CD8-positive, alpha-beta T cell (primary cell): ENCODE measurements at regions of chr6 and their contacts with region 1.

Region 1: DNA sequence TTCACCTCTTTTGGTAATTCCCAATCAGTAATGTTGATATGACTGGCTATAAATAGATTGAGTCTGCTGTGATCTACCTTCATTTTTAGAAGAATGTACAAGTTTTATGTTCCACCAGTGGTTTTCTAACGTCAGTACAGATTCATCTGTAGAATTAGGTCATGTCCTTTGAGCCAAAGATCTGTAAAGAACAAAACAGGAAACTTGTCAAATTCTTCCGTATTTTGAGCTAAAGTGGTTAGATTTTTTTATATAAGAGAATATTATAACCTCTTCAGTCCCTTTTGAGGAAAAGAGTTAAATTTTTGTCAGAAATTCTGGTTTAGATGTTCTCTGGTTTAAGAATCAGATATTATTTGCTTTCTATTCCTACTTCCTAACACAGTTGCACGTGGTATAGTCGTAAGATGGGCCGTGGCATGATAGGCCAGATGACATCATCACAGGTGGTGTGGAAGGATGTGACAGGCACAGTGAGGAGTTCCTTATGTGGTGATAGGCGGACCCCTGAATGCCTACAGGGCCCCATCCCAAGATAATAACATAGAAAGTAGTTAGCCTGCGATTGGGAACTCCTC is 62.3 kb downstream of the SNX9 start:
- DNase-seq: peak in 8 of 9 experiments; percentile 19 to 87 (median 60)
- ATAC-seq: peak; percentile 81
- H3K4me3 ChIP-seq: no peak overlapping the region
- H3K4me3 Mint-ChIP-seq: peak overlapping the region; percentile 36
- H3K27ac ChIP-seq: peak overlapping the region; percentile 75 to 89
- H3K27ac Mint-ChIP-seq: peak overlapping the region; percentile 93
- H3K4me1 ChIP-seq: peaks cover 32% of the 10 kb centered on the region
- H3K4me1 Mint-ChIP-seq: peaks cover 49% of the 10 kb centered on the region
- H3K27me3 ChIP-seq: no peaks in the 10 kb centered on the region
- H3K27me3 Mint-ChIP-seq: no peaks in the 10 kb centered on the region
- CTCF ChIP-seq: no peak

Region 2: GRCh38 chr6:157428427-157429202 is 456.7 kb before region 1 on chr6:
- CTCF ChIA-PET with region 1: no interaction called
- POLR2A ChIA-PET with region 1: no interaction called
- intact Hi-C with region 1: no loop called
- DNase-seq: no peak
- ATAC-seq: no peak
- H3K4me3 ChIP-seq: no peak overlapping the region
- H3K4me3 Mint-ChIP-seq: no peak overlapping the region
- H3K27ac ChIP-seq: no peak overlapping the region
- H3K27ac Mint-ChIP-seq: no peak overlapping the region
- H3K4me1 ChIP-seq: no peaks in the 10 kb centered on the region
- H3K4me1 Mint-ChIP-seq: no peaks in the 10 kb centered on the region
- H3K27me3 ChIP-seq: no peaks in the 10 kb centered on the region
- H3K27me3 Mint-ChIP-seq: no peaks in the 10 kb centered on the region
- CTCF ChIP-seq: no peak

Region 3: DNA sequence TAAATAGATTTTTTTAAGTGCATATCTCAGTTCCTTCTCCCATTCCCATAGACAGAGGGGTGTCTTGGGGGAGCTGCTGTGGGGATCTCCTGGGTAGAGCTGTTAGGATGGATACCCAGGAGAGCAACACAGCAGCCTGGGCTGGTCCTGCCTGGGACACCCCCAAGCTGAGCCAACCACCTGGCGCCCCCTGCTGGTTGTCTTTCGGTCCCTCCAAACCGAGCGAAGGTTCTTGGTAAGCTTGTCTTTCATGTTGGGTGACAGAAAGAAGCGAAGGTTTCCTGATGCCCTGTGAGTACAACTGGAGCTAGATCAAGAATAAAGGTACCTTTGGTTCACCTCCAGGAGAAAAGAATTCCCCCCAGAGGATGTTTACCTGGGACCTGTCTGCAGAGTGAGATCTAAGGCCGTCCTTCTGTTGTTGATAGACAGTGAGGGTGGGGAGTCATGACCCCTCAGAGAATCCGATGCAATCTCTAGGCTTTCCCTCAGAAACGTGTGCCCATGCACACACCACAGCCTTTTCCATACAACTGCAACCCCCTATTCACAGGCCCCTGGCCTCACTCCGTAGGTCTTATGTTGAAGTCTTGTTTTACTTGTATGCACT is 11.5 kb before region 1 on chr6:
- CTCF ChIA-PET with region 1: interaction called, 24 read pairs
- POLR2A ChIA-PET with region 1: interaction called, 3 read pairs
- intact Hi-C with region 1: no loop called
- DNase-seq: peak; percentile 65 to 91 (median 81)
- ATAC-seq: peak; percentile 76
- H3K4me3 ChIP-seq: no peak overlapping the region
- H3K4me3 Mint-ChIP-seq: no peak overlapping the region
- H3K27ac ChIP-seq: no peak overlapping the region
- H3K27ac Mint-ChIP-seq: no peak overlapping the region
- H3K4me1 ChIP-seq: peaks cover 25% of the 10 kb centered on the region
- H3K4me1 Mint-ChIP-seq: peaks cover 29% of the 10 kb centered on the region
- H3K27me3 ChIP-seq: no peaks in the 10 kb centered on the region
- H3K27me3 Mint-ChIP-seq: no peaks in the 10 kb centered on the region
- CTCF ChIP-seq: peak; percentile 84

Region 4: GRCh38 chr6:157898169-157898568 is 12.9 kb after region 1 on chr6:
- CTCF ChIA-PET with region 1: interaction called, 5 read pairs
- POLR2A ChIA-PET with region 1: interaction called, 4 read pairs
- intact Hi-C with region 1: loop called in 1 of 2 experiments (anchors 1 kb)
- DNase-seq: peak in 4 of 9 experiments; percentile 44 to 63 (median 54)
- ATAC-seq: peak; percentile 56
- H3K4me3 ChIP-seq: no peak overlapping the region
- H3K4me3 Mint-ChIP-seq: no peak overlapping the region
- H3K27ac ChIP-seq: no peak overlapping the region
- H3K27ac Mint-ChIP-seq: peak overlapping the region; percentile 41
- H3K4me1 ChIP-seq: peaks cover under 1% of the 10 kb centered on the region
- H3K4me1 Mint-ChIP-seq: peaks cover 16% of the 10 kb centered on the region
- H3K27me3 ChIP-seq: no peaks in the 10 kb centered on the region
- H3K27me3 Mint-ChIP-seq: no peaks in the 10 kb centered on the region
- CTCF ChIP-seq: peak; percentile 45